Activated CD4-positive, alpha-beta T cell treated with anti-CD3 and anti-CD28 coated beads, Interleukin-2, amount 10 ng/mL, durations not matched to agents 24 days and 14 days (primary cell): ENCODE measurements at regions of chr11 and their contacts with region 1.

Region 1: DNA sequence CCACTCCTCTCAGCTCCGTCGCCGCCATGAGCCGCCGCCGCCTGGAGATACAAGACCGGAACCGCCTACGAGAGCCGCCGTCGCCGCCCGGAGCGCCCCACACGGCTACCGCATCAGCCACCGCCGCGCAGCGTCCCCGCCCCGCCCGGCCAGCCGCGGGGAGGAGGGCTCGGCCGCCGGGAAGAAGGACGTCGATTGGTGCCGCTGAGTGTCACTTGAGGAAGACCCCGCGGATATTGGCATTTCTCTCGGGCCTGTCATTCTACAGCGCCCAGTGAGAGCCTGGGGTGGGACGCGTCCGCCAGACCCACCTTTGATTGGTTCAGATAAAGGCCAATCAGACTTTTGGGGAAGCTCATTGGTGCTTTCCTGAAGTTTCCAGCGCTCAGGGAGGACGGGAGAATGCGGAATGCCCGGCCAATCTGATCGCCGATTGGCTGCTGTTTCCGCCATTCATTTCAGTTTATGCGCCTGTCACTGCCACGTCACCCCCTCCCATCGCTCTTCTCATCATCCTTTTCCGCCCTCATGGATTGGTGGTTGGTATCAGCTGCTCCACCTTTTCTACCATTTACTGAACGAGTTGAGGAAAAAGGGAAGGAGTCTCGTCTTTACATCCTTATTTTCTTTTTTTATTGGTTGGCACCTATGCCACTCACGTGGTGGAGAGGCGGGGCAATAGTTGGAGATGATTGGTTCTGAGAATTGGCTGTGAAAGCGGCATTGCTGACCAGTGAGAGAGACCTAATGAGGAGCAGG is at the start of gene OSBP:
- DNase-seq: peak; percentile 99
- H3K4me3 Mint-ChIP-seq: peak within 1 kb of the TSS; percentile 94
- H3K27ac Mint-ChIP-seq: peak within 1 kb of the TSS; percentile 91
- H3K4me1 Mint-ChIP-seq: peaks cover 43% of the 10 kb centered on the region
- H3K27me3 Mint-ChIP-seq: no peaks in the 10 kb centered on the region
- total RNA-seq, gene OSBP: 39.7 and 40.1 TPM in 2 replicates

Region 2: GRCh38 chr11:57712256-57713150 is 1903.3 kb before region 1 on chr11 and contains the start of gene TMX2:
- intact Hi-C with region 1: loop called (anchors 2 kb)
- DNase-seq: peak; percentile 97
- H3K4me3 Mint-ChIP-seq: peak within 1 kb of the TSS; percentile 95
- H3K27ac Mint-ChIP-seq: peak within 1 kb of the TSS; percentile 96
- H3K4me1 Mint-ChIP-seq: peaks cover 39% of the 10 kb centered on the region
- H3K27me3 Mint-ChIP-seq: no peaks in the 10 kb centered on the region
- total RNA-seq, gene TMX2: 99.0 and 99.2 TPM in 2 replicates

Region 3: DNA sequence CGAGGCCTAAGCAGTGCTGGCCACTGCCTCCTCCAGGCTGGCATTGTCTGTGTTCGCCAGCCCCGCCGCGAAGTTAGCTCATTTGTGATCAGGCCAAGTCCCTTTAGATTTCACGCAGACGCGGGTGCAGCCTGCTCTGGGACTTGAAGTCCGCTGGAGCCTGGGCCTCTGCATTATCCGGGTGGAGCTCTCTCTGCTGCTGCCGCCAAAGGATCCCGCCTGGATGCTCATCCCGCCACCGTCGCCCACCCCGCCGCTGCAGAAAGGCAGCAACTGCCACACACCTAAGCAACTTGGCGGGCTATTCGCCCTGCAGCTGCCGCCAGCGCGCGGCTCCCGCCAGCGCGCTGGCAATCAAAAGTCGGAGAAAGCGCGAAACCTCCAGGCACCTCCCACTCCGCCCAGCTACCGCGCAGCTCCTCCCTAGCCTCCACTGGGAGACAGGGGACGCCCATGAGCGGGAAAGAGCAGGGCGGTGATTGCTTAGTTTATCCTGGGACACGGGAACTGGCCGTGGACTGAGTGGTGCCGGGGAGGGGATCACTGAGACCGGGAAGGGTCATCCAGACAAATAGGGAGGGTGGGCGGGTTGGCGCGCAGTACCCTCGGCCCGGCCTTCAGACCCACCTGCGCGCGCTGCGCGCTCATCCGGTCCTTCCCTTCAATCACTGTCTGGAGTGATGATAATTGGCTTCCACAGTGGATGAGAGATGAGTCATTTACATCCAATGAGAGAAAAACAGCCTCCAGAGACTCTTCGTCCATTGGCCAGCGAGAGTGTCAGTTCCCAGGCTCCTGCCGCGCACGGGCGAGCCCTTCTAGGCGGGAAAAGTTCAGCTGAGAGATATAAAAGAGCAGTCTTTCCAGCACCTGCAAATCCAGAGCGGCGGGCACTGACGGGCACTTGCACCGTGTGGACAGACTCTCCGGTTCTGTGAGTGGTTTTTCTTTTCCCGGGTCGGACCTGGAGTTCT is 509.2 kb before region 1 on chr11 and contains the start of gene FAM111B:
- intact Hi-C with region 1: loop called (anchors 2 kb)
- DNase-seq: peak; percentile 93
- H3K4me3 Mint-ChIP-seq: peak within 1 kb of the TSS; percentile 94
- H3K27ac Mint-ChIP-seq: peak within 1 kb of the TSS; percentile 85
- H3K4me1 Mint-ChIP-seq: peaks cover 66% of the 10 kb centered on the region
- H3K27me3 Mint-ChIP-seq: no peaks in the 10 kb centered on the region
- total RNA-seq, gene FAM111B: 68.4 and 70.1 TPM in 2 replicates

Region 4: GRCh38 chr11:59550368-59550841 is 65.4 kb before region 1 on chr11:
- intact Hi-C with region 1: loop called (anchors 1 kb)
- DNase-seq: peak; percentile 95
- H3K4me3 Mint-ChIP-seq: peak overlapping the region; percentile 85
- H3K27ac Mint-ChIP-seq: peak overlapping the region; percentile 88
- H3K4me1 Mint-ChIP-seq: peaks cover 22% of the 10 kb centered on the region
- H3K27me3 Mint-ChIP-seq: peaks cover 15% of the 10 kb centered on the region

Region 5: DNA sequence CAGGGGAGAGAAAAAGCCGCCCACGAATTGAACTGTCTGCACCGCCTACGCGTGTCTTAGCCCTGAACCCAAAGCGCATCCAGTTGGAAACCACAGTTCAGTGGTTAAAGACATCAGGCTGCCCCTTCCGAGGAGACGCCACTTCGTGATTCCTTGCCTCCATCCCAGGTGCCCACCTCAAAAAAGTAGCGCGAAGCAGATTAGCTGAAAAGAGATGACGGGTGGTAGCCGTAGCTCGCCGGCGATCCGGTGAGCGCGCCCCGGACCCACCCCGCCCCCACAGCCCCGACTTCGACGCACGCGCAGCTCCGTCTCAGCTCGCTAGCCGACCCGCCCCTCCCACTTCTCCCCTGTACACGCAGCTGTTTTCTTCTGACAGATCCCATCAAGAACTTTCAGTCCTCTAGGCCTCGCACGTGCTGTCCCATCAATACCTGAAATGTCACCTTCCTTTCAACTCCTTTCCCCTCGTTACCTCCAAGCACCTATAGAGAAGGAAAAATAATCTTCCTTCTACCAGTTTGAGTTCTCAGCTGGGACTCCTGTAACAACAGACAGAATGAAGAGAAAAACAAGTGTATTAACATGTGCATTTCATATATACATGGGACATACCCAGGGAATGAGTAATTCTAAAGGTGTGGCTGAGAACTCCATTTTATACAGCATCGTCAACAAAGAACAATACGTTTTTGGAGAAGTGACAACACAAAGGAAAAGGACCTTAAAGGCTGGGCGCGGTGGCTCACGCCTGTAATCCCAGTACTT is 54.9 kb before region 1 on chr11:
- intact Hi-C with region 1: loop called (anchors 2 kb)
- DNase-seq: peak; percentile 90
- H3K4me3 Mint-ChIP-seq: peak overlapping the region; percentile 89
- H3K27ac Mint-ChIP-seq: peak overlapping the region; percentile 96
- H3K4me1 Mint-ChIP-seq: peaks cover 46% of the 10 kb centered on the region
- H3K27me3 Mint-ChIP-seq: peaks cover 6% of the 10 kb centered on the region

Region 6: GRCh38 chr11:59641156-59641555 is 25.3 kb after region 1 on chr11:
- intact Hi-C with region 1: no loop called
- DNase-seq: no peak
- H3K4me3 Mint-ChIP-seq: no peak overlapping the region
- H3K27ac Mint-ChIP-seq: no peak overlapping the region
- H3K4me1 Mint-ChIP-seq: peaks cover 2% of the 10 kb centered on the region
- H3K27me3 Mint-ChIP-seq: no peaks in the 10 kb centered on the region

Region 7: DNA sequence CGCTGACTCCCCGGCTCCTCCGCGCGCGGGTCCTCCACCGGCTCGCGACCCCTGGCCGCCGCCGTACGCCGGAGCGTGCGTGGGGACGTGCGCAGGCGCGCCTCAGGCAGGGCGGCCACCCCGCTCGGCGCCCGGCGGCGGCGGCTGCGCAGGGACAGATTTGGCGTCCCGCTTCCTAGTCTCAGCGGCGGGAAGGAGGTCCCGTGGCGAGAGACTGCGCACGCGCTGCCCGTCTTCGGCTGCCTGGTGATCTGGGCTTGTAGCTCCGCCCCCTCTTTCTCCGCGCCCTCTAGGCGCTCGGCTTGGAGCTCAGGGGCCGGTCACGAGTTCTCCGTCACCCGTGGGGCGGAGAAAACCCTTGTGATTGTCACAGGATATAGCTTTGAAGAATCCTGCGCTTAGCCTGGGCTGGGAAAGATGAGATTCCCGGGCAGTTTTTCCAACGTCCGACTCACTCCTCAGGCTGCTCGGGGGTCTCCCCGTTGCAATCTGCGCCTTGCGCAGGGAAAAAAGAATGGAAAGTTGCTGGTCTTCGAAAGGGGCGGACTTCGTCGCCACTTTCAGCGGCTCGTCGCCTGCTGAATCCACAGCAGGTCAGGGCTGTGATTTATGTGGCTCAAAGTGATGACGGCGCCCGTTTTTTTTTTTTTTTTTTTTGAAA is 53.3 kb after region 1 on chr11 and contains the start of gene PATL1:
- intact Hi-C with region 1: loop called (anchors 1 kb)
- DNase-seq: peak; percentile 100
- H3K4me3 Mint-ChIP-seq: peak within 1 kb of the TSS; percentile 98
- H3K27ac Mint-ChIP-seq: peak within 1 kb of the TSS; percentile 97
- H3K4me1 Mint-ChIP-seq: peaks cover 40% of the 10 kb centered on the region
- H3K27me3 Mint-ChIP-seq: peaks cover 1% of the 10 kb centered on the region
- total RNA-seq, gene PATL1: 72.4 and 76.1 TPM in 2 replicates

Region 8: DNA sequence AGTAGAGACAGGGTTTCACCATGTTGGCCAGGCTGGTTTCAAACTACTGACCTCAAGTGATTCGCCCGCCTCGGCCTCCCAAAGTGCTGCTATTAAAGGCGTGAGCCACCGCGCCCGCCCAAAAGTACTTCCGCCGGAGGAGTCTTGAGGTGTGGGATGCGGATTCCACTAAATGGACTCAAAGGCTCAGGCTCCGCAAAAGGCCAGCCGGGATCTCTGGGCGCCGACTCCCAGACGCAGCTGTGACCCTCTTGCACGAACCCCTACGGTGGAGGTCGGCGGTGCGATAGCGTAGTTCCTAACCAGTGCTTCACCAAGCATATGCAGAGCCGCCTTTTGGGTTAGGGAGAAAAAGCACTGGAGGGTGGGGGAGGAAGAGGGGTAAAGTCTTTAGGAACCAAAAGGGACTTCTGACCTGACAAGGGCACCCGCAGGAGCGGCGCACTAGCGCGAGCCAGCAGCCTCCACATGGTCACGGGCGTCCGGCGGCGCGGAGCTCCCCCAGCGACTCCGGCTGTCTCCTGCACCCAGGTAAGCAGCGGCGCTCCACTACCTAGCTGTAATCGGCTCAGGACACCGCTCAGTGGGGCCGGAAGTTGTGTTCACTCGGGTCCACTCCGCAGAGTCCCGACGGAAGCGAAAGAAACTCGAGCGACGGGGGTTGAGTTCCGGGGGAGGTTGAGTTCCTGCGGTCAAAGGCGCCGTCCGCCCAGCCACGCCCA is 194.5 kb after region 1 on chr11 and contains the start of gene MRPL16:
- intact Hi-C with region 1: loop called (anchors 1 kb)
- DNase-seq: peak; percentile 95
- H3K4me3 Mint-ChIP-seq: peak within 1 kb of the TSS; percentile 92
- H3K27ac Mint-ChIP-seq: peak within 1 kb of the TSS; percentile 91
- H3K4me1 Mint-ChIP-seq: peaks cover 22% of the 10 kb centered on the region
- H3K27me3 Mint-ChIP-seq: no peaks in the 10 kb centered on the region
- total RNA-seq, gene MRPL16: 96.8 and 97.4 TPM in 2 replicates